Activated CD4-positive, alpha-beta T cell treated with anti-CD3 and anti-CD28 coated beads for 36 hours (primary cell): ENCODE measurements at regions of chr7 and their contacts with region 1.

Region 1: GRCh38 chr7:73433924-73434700 is 534 bp downstream of the FZD9 start:
- DNase-seq: peak; percentile 53
- ATAC-seq: peak; percentile 38
- H3K4me3 Mint-ChIP-seq: peak overlapping the region; percentile 23
- H3K27ac Mint-ChIP-seq: no peak overlapping the region
- H3K4me1 Mint-ChIP-seq: no peaks in the 10 kb centered on the region
- H3K27me3 Mint-ChIP-seq: peaks cover 11% of the 10 kb centered on the region

Region 2: DNA sequence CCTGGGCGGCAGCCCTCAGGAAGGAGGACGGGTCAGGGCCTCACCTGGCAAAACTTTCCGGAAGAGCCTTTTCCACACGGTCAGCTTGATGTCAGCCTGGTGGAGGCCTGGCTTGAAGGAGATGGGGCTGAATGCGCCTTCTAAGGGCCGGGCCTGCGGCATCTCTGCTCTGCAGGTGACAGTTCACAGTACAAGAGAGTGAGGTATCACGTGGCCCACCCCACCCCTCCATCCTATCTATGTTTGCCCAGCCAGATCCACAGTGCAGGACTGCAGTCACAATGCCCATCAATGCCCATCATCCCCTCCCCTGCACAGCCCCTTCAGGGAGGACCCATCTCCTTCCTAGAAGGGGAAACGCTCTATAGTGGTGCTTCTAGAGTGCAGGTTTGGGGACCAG is 117.6 kb before region 1 on chr7:
- CTCF ChIA-PET with region 1: no interaction called
- POLR2A ChIA-PET with region 1: no interaction called
- intact Hi-C with region 1: loop called in 1 of 2 experiments (anchors 5 kb)
- DNase-seq: no peak
- ATAC-seq: no peak
- H3K4me3 Mint-ChIP-seq: no peak overlapping the region
- H3K27ac Mint-ChIP-seq: no peak overlapping the region
- H3K4me1 Mint-ChIP-seq: no peaks in the 10 kb centered on the region
- H3K27me3 Mint-ChIP-seq: no peaks in the 10 kb centered on the region

Region 3: DNA sequence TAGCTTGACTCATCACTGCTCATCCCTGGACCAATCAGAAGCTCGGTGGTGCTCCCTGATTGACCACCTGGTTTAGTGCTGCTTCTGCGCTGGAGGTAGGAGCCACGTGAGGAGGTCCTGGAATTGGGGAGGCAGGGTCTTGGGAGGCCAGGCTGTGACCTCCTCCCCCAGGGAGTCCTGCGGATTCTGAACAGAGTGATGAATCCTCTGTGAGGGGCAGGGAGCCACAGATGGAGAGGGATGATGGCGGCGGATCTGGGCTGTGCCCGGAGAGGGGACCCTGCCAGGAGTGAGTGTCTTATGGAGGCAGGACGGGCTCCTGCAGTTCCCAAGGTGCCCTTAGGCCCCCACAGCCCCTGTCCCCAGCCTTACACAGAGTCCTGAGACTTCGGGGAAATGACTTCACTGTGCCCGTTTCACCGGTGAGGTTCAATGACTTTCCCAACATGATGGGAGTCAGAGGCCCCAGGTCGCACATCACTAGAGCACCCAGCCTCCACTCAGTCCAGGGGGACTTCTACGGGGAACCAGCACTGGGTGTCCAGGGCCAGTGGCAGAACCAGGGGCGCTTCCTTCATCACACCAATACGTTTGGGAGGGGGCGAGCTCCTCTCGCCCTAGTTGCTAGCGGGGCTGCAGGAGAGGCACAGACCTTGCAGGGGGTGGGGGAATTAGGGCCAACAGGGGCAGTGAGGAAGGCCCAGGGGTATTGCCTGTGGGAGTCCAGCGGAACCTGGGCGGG is 57.3 kb before region 1 on chr7:
- CTCF ChIA-PET with region 1: no interaction called
- POLR2A ChIA-PET with region 1: no interaction called
- intact Hi-C with region 1: no loop called
- DNase-seq: no peak
- ATAC-seq: no peak
- H3K4me3 Mint-ChIP-seq: no peak overlapping the region
- H3K27ac Mint-ChIP-seq: no peak overlapping the region
- H3K4me1 Mint-ChIP-seq: no peaks in the 10 kb centered on the region
- H3K27me3 Mint-ChIP-seq: peaks cover 16% of the 10 kb centered on the region

Region 4: DNA sequence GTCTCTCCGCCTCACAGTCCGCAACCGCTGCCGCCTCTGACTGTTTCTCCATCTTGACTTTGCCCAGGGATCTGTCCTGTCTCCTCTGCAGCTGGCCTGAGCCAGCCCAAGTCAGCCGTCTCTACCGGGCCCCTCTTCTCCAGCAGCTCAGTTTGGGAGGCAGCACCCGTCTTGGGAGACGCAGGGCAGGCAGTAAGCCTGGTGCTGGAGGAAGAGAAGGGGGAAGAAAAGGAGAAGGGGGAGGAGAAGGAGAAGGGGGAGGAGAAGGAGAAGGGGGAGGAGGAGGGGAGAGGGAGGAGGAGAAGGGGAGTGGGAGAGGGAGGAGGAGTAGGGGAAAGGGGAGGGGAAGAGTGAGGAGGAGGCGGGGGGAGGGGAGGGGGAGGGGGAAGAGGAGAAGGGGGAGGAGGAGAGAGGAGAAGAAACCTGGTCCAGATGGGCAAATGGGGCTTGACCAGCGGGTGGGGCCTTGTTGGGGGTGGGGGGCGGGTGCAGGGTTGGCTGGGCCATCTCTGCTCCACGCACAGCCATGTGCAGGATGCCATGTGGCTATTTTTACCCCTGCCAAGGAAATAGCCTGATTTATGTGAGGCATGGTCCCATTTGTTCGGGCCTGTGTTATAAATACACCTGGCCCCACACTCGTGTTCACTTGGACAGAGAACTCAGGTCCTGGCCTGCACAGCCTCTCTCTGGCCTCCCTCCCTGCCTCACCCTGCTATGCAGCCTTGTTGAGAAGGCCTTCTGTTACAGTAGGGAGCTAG is 36.4 kb before region 1 on chr7:
- CTCF ChIA-PET with region 1: no interaction called
- POLR2A ChIA-PET with region 1: no interaction called
- intact Hi-C with region 1: loop called in 1 of 2 experiments (anchors 1 kb)
- DNase-seq: no peak
- ATAC-seq: no peak
- H3K4me3 Mint-ChIP-seq: no peak overlapping the region
- H3K27ac Mint-ChIP-seq: no peak overlapping the region
- H3K4me1 Mint-ChIP-seq: no peaks in the 10 kb centered on the region
- H3K27me3 Mint-ChIP-seq: peaks cover 5% of the 10 kb centered on the region

Region 5: DNA sequence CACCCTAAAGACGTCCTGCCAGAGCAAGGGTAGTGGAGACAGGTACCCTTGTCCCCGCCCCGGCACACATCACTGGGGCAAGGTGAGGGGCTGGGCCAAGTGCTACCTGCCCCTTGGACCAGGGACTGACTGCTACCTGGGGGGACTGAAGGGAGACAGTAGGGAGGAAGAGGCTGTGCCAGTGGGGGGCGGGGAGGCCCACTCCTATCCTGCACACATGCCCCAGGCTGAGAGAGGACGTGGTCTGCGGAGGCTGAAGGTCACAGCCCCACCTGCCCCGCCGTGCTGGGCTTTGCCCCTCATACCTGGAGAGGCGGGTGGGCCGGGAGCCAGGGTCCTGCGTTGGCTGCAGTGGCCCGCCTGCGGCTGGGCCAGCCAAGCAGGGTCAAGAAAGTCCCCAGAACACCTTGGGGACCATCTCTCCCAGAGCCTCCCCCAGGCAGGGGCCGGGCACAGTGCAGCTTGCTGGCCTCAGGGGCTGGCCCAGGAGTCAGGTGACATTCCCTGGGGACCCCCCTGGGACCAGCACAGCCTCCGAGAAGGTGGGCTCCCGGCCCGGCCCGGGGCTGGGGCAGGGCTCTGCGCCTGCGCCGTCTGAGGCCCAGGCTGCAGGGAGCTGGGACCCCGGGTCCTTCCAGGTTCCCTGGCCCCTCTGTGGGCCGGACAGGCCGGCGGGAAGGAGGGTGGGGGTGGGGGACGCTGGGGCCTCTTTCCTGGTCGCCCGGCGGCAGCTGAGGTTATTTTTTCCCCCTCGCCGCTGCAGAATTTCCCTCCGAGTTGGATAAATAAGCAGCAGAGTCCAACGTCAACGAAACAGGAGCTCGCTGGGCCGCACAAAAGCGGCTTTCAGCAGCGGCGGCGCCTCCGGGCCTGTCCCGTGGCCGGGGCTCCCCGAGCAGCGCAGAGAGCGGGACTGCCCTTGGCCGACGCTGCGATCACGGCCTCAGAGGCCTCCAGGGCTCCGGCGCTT is 10.3 kb before region 1 on chr7:
- CTCF ChIA-PET with region 1: no interaction called
- POLR2A ChIA-PET with region 1: no interaction called
- intact Hi-C with region 1: no loop called
- DNase-seq: no peak
- ATAC-seq: no peak
- H3K4me3 Mint-ChIP-seq: no peak overlapping the region
- H3K27ac Mint-ChIP-seq: no peak overlapping the region
- H3K4me1 Mint-ChIP-seq: peaks cover 6% of the 10 kb centered on the region
- H3K27me3 Mint-ChIP-seq: peaks cover 2% of the 10 kb centered on the region

Region 6: DNA sequence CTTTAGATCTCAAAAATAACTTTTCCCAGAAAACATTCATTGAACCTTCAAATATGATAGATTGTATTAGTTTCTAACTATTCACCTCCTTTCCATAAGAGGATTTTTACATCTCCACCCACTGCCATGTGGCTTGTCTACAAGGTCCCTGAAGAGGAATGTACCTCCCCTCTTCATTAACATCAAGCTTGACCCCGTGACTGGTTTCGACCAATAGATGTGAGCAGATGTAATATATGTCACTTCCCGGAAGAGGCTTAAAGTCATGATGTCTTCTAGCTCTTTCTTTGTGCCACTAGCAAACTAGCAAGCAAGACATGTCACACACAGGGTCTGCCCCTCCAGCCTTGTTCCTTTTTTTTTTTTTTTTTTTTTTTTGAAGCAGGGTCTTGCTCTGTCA is 81.1 kb after region 1 on chr7:
- CTCF ChIA-PET with region 1: no interaction called
- POLR2A ChIA-PET with region 1: no interaction called
- intact Hi-C with region 1: no loop called
- DNase-seq: no peak
- ATAC-seq: peak; percentile 62
- H3K4me3 Mint-ChIP-seq: no peak overlapping the region
- H3K27ac Mint-ChIP-seq: peak overlapping the region; percentile 29
- H3K4me1 Mint-ChIP-seq: peaks cover 51% of the 10 kb centered on the region
- H3K27me3 Mint-ChIP-seq: no peaks in the 10 kb centered on the region

Region 7: DNA sequence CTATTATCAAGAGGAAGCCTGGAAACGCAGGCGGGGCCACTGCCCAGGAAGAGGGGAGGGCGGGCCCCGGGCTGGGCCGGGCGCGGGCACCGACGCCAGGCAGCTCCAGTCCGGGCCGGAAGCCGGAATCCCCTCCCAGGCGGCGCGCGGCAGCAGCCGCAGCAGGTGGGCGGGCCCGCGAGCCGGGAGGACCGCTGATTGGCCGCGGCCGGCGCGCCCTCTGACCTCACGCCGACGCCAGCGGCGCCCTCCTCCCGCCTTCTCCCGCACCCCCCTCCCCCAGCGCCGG is 122.9 kb after region 1 on chr7:
- CTCF ChIA-PET with region 1: no interaction called
- POLR2A ChIA-PET with region 1: no interaction called
- intact Hi-C with region 1: loop called in 1 of 2 experiments (anchors 1 kb)
- DNase-seq: peak; percentile 95
- ATAC-seq: peak; percentile 92
- H3K4me3 Mint-ChIP-seq: peak overlapping the region; percentile 93
- H3K27ac Mint-ChIP-seq: peak overlapping the region; percentile 91
- H3K4me1 Mint-ChIP-seq: peaks cover 35% of the 10 kb centered on the region
- H3K27me3 Mint-ChIP-seq: no peaks in the 10 kb centered on the region

Region 8: GRCh38 chr7:73822319-73823076 is 388.4 kb after region 1 on chr7:
- CTCF ChIA-PET with region 1: no interaction called
- POLR2A ChIA-PET with region 1: no interaction called
- intact Hi-C with region 1: no loop called
- DNase-seq: no peak
- ATAC-seq: no peak
- H3K4me3 Mint-ChIP-seq: no peak overlapping the region
- H3K27ac Mint-ChIP-seq: no peak overlapping the region
- H3K4me1 Mint-ChIP-seq: peaks cover 13% of the 10 kb centered on the region
- H3K27me3 Mint-ChIP-seq: peaks cover 2% of the 10 kb centered on the region